Dorsolateral prefrontal cortex (tissue), 120 donors: ENCODE measurements at regions of chr4 and their contacts with region 1.

Region 1: DNA sequence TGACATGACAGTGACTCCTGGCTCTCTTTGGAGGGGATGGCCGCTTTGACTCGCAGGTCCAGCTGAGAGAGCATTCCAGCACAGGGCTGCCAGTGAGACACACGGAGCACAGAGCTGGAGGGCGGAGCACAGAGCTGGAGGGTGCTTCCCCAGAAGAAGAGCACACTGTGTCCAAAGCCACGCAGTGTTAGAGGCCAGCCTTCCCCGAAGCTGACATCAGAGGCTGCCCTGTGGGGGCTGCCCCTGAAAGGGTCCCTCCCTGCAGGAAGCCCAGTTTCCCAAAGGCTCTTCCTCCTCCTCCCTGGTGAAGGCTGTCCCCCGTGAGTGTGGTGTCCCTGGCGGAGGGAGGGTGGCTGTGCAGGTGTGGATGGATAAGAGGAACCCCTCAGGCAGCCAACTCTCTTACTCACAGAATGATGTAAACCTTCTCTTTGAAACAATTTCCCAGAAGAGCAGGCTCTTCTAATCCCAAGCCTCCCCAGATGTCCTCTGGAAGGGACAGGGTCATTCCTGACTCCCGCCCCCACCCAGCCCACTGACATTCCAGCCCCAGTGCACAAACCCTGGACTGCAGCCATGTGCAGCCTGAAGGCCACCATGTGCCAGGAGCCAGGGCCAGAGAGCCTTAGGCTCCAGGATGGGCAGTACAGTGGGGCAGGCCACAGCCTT is 53.4 kb downstream of the PSAPL1 start:
- DNase-seq: peak in 8 of 10 donors; percentile 27 to 66 (median 48)
- H3K4me3 ChIP-seq: no peak overlapping the region
- H3K27ac ChIP-seq: peak overlapping the region in 43 of 59 donors; percentile 20 to 94 (median 76)
- H3K27me3 ChIP-seq: no peaks in the 10 kb centered on the region
- CTCF ChIP-seq: no peak

Region 2: DNA sequence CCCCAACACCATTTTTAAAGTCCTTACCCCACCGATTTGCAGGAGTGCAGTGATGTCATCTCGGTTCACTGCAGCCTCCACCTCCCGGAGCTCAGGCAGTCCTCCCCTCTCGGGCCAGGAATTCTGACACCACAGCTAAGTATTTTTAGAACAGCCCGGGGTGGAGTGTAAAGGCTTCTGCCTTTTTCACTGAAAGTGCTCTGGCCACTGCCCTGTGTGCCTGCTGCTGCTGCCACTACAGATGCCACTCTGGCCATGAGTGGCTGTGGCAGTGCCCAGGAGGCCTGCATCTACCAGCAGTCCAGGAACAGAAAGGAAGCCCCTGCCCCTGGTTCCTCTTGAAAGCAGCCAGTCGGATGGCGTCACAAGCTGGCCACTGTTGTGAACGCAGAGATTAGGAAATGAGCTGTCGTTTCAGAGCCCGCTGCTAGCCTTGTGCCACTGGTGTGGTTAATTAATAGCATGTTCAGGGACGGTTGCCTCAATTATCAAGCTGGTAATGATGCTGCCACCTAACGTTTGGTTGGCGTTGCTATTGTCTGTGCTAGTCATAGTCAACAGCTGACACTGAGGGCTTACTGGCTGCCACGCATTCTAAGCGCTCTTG is 495.3 kb before region 1 on chr4:
- intact Hi-C with region 1: no loop called
- DNase-seq: peak; percentile 42 to 90 (median 70)
- H3K4me3 ChIP-seq: peak overlapping the region in 8 of 59 donors; percentile 4 to 32 (median 13)
- H3K27ac ChIP-seq: peak overlapping the region in 57 of 59 donors; percentile 18 to 85 (median 70)
- H3K27me3 ChIP-seq: no peaks in the 10 kb centered on the region
- CTCF ChIP-seq: peak in 55 of 56 donors; percentile 21 to 79 (median 58)

Region 3: DNA sequence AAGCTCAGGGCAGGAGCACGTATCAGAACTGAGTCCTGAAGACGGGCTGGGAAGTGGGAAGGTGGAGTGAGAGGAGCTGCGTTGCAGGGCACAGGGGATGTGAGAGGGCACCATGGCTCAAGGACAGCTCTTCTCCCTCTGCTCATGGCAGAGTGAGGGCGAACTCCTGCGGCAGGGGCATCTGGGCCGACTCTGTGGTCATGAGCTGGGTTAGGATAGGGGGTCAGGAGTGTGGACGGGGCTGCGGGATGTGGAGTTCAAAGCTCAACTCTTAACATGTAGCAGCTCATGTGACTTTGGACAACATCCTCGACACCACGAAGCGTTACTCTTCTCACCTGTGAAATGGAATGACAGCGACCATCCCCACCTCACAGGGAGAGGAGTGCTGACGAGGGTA is 208.4 kb before region 1 on chr4:
- intact Hi-C with region 1: no loop called
- DNase-seq: peak in 4 of 10 donors; percentile 15 to 22 (median 17)
- H3K4me3 ChIP-seq: no peak overlapping the region
- H3K27ac ChIP-seq: no peak overlapping the region
- H3K27me3 ChIP-seq: no peaks in the 10 kb centered on the region
- CTCF ChIP-seq: no peak

Region 4: GRCh38 chr4:7625071-7625470 is 243.7 kb after region 1 on chr4:
- intact Hi-C with region 1: loop called in 1 of 2 experiments (anchors 10 kb)
- DNase-seq: peak in 7 of 10 donors; percentile 28 to 69 (median 55)
- H3K4me3 ChIP-seq: peak overlapping the region in 9 of 59 donors; percentile 1 to 29 (median 13)
- H3K27ac ChIP-seq: peak overlapping the region in 2 of 59 donors; percentile 5 to 13
- H3K27me3 ChIP-seq: peaks cover 0 to 4% (median 0%) of the 10 kb centered on the region in 45 donors
- CTCF ChIP-seq: no peak